ENCODE measurements at regions of chr10 and their contacts with region 1.

Region 1: DNA sequence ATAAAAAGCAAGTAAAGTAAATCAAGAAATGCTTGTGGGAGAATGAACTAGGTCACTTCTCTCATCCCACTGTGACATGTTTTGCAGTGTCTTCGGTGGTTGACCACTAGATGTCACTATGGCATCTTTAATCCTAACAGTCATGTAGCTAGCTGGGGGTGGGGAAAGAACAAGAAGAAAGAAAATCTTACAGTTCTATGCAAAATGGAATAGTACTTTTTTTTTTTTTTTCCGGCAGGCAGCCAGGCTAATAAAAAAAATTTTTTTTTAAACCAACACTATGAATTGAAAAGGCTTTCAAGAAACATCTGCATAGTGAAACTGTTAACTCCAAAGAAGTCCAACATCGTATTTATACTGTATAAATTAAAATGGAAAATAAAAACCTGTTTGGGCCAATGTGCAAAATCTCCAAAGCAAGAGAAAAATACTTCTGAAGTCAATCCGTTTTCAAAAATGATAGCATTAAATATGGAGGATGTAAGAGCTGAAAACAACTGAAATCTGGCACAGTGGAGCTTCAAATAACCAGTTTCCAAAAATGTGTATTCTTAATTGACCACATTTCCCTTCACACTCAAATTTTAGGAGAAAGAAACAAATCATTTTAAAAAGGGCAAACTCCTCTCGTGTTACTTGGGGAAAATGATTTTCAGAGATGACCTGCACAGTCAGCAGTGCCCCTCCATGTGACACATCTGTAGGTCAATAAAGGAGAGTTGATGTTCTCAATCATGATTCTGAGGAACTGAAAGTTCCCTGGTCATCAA is 38.5 kb downstream of the CDK1 start:
- DNase-seq: peak; percentile 64 to 89
- H3K4me3 ChIP-seq: no peak overlapping the region
- H3K4me1 ChIP-seq: peaks cover 3% of the 10 kb centered on the region; the same call in 1 of the 2 replicates
- H3K27me3 ChIP-seq: no peaks in the 10 kb centered on the region

Region 2: GRCh38 chr10:59808896-59809643 is 1007.7 kb before region 1 on chr10:
- in situ Hi-C with region 1: no loop called
- DNase-seq: peak; percentile 59 to 88
- H3K4me3 ChIP-seq: no peak overlapping the region
- H3K4me1 ChIP-seq: peaks cover 4% of the 10 kb centered on the region
- H3K27me3 ChIP-seq: no peaks in the 10 kb centered on the region

Region 3: DNA sequence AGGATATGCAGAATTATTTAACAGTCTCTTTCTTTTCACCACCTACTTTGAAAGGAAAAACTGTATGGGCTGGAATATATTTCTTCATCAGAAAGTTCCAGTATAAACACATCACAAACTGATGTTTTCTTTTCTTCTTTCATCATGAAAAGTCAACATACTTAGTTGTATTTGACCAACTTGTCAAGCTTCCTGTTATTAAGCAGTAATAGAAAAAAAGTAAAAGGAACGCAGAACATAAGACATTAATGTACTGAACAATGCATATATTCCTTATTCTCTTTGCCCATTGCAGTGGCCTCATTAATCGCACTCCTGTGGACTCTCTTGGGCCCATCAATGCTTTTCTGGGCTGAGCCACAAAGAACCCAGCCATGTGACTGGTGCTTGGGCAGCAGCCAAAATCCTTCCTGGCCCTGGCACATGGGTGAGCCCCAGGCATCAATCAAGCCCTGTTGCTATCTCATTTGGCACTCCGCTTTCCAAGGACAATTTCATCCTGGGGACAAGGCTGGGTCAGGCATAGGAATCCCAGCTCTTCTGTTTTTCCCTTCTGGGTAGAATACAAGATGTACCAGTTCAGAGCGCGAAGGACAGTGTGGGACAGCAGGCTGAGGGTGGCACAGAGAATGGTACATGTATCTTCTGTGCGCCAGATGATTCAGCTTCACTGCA is 84.9 kb after region 1 on chr10:
- in situ Hi-C with region 1: no loop called
- DNase-seq: no peak
- H3K4me3 ChIP-seq: no peak overlapping the region
- H3K4me1 ChIP-seq: no peaks in the 10 kb centered on the region; the same call in 1 of the 2 replicates
- H3K27me3 ChIP-seq: no peaks in the 10 kb centered on the region

Region 4: GRCh38 chr10:61733358-61733940 is 916.6 kb after region 1 on chr10:
- in situ Hi-C with region 1: loop called (anchors 25 kb)
- DNase-seq: peak; percentile 57 to 62
- H3K4me3 ChIP-seq: no peak overlapping the region
- H3K4me1 ChIP-seq: no peaks in the 10 kb centered on the region
- H3K27me3 ChIP-seq: no peaks in the 10 kb centered on the region